Heart right ventricle (tissue), 16 donors: ENCODE measurements at regions of chrX and their contacts with region 1.

Region 1: DNA sequence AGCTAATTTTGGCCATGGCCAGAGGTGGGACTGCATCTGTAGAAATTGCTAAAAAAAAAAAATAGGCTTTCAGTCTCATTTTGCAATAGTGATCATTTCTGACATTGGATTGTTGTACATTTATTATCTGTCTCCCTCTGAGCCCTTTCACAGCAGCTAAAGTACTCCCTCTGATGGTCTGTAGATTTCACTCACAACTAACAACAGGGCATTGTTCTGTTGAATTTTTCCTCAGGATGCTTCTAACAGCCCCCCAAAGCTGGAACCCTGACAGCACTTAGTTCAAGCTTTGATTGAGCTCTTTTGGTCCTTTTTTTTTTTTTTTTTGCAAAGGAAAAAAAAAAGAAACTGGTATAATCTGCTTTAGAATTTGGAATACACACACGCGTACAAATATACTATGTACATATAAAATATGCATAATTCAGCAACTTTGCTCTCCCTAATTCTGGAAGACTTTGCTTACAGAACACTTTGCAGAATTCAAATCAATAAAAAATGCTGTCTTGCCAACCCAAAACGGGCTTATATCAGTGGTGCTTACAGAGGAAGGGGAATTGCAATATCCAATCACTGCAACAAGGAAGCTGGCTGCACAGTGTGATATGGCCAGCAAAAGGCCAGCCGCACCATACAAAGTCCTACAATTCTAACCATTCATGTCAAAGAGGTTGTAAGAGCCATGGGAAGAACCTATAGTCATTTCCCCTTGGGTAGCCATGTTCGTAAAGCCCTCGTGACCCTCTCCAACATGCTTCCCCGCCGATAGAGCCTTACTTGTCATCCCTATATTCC is 406.4 kb downstream of the SMARCA1 start:
- DNase-seq: no peak
- ATAC-seq: no peak
- H3K4me3 ChIP-seq: no peak overlapping the region
- H3K27ac ChIP-seq: no peak overlapping the region
- H3K4me1 ChIP-seq: no peaks in the 10 kb centered on the region
- H3K27me3 ChIP-seq: peaks cover 0 to 2% (median 0%) of the 10 kb centered on the region in 7 donors
- CTCF ChIP-seq: no peak

Region 2: DNA sequence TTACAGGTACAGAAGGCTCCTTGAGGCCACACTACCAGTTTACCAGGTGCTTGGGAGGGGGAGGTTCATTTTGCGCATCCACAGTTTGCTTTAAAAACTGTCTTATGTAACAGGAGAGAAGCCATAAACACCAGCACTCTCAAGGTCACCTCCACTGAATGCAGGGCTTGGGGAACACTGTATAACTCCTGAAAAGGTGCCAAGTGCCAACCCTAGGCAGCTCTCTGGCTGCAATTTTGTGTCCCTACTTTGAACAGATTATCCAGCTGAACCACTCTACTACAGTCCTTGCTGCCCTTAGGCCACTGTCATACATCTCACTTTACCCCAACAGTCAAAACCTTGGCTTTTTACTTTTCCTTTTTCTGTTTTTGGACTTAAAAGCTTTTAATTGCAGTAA is 101.5 kb before region 1 on chrX:
- intact Hi-C with region 1: no loop called
- DNase-seq: peak in 1 of 2 donors; percentile 3
- ATAC-seq: peak in 3 of 8 donors; percentile 31 to 65 (median 41)
- H3K4me3 ChIP-seq: no peak overlapping the region
- H3K27ac ChIP-seq: no peak overlapping the region
- H3K4me1 ChIP-seq: no peaks in the 10 kb centered on the region
- H3K27me3 ChIP-seq: peaks cover 0 to 3% (median 0%) of the 10 kb centered on the region in 7 donors
- CTCF ChIP-seq: no peak

Region 3: GRCh38 chrX:129139837-129140598 is 23.1 kb after region 1 on chrX:
- intact Hi-C with region 1: loop called in 1 of 10 experiments (anchors 1 kb)
- DNase-seq: no peak
- ATAC-seq: no peak
- H3K4me3 ChIP-seq: no peak overlapping the region
- H3K27ac ChIP-seq: no peak overlapping the region
- H3K4me1 ChIP-seq: no peaks in the 10 kb centered on the region
- H3K27me3 ChIP-seq: peaks cover 0 to 8% (median 0%) of the 10 kb centered on the region in 7 donors
- CTCF ChIP-seq: no peak

Region 4: GRCh38 chrX:129833152-129833990 is 716.5 kb after region 1 on chrX:
- intact Hi-C with region 1: no loop called
- DNase-seq: no peak
- ATAC-seq: peak in 1 of 8 donors; percentile 65
- H3K4me3 ChIP-seq: no peak overlapping the region
- H3K27ac ChIP-seq: no peak overlapping the region
- H3K4me1 ChIP-seq: peaks cover 0 to 4% (median 0%) of the 10 kb centered on the region in 9 donors
- H3K27me3 ChIP-seq: no peaks in the 10 kb centered on the region
- CTCF ChIP-seq: no peak